ENCODE measurements at regions of chr20 and their contacts with region 1.

Region 1: DNA sequence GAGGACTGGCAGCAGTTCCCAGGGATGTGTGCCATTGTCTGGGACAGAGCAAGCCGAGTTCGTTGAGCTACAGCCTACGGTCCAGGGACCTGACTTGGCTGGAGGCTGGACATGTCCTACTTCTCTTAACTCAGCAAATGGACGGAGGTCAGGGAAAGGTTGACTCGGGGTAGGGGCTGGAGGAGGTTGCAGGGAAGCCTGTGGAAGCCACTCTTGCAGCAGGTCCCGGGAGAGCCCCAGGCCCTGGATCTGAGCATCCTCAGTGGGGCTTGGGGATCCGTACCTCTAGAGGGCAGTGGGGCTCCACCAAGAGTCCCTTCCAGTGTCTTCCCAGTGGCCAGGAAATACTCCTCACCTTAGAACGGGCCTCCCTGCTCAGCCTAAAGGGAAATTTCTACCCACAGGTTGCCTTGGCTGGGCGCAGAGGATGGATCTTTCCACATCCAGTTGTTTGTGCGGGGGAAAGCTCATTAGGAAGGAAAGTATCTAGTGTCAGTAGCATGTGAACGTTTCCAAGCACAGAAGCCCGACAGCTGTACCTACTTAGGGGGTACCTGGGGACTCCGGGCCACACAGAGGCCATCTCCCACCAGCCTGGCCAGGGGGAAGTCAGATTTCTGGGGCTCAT is 170.2 kb downstream of the NFATC2 start:
- DNase-seq: no peak

Region 2: DNA sequence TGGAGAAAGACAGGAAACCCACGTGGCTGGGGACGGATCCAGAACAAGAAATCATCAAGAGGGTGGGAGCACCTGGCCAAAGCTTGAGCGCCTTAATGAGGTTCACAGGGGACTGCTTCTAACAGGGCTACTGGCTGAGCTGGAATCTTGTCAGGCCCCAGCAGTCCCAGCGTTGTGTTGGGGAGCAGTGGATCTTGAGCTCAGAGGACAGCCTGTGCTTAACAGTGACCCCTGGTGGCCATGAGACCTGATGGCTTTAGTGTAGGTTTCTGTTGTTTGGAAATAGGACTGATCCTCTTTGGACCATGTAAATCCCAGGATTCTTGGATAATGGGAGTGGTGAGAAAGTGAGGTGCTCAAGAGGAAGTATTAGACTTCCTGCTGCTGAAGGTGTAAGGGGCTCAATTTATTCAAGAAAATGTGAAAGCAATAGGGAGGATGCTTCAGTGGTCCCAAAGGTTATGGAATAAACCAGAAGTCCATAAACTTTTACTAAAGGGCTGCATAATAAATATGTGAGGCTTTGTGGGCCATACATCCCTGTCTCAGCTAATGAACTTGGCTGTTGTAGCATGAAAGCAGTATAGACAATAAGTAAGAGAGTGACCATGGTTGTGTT is 46.0 kb before region 1 on chr20:
- intact Hi-C with region 1: no loop called
- DNase-seq: no peak

Region 3: GRCh38 chr20:51595058-51595532 is 222.8 kb after region 1 on chr20:
- intact Hi-C with region 1: loop called (anchors 2 kb)
- DNase-seq: peak; percentile 92

Region 4: GRCh38 chr20:51624157-51624731 is 252.0 kb after region 1 on chr20:
- intact Hi-C with region 1: loop called (anchors 10 kb)
- DNase-seq: no peak

Region 5: GRCh38 chr20:52083627-52084232 is 711.4 kb after region 1 on chr20:
- intact Hi-C with region 1: loop called (anchors 5 kb)
- DNase-seq: no peak